ENCODE measurements at regions of chr10 and their contacts with region 1.

Region 1: GRCh38 chr10:128078136-128078969 is 47.9 kb downstream of the MKI67 start:
- DNase-seq: peak; percentile 39
- H3K4me3 Mint-ChIP-seq: no peak overlapping the region
- H3K27ac Mint-ChIP-seq: no peak overlapping the region
- H3K4me1 Mint-ChIP-seq: peaks cover 9% of the 10 kb centered on the region
- H3K27me3 Mint-ChIP-seq: no peaks in the 10 kb centered on the region

Region 2: GRCh38 chr10:128095027-128095752 is 16.8 kb after region 1 on chr10:
- CTCF ChIA-PET with region 1: interaction called, 10 read pairs
- POLR2A ChIA-PET with region 1: no interaction called
- DNase-seq: peak; percentile 22
- H3K4me3 Mint-ChIP-seq: no peak overlapping the region
- H3K27ac Mint-ChIP-seq: peak overlapping the region; percentile 62
- H3K4me1 Mint-ChIP-seq: peaks cover 44% of the 10 kb centered on the region
- H3K27me3 Mint-ChIP-seq: no peaks in the 10 kb centered on the region